ENCODE measurements at regions of chr1 and their contacts with region 1.

Region 1: GRCh38 chr1:41919764-41920397 is 1.2 kb upstream of the HIVEP3 start:
- DNase-seq: peak; percentile 55 to 85 (median 74)
- ATAC-seq: peak; percentile 83 to 86 (median 86)
- H3K4me3 ChIP-seq: peak overlapping the region; percentile 58 to 72
- H3K4me3 Mint-ChIP-seq: peak overlapping the region; percentile 88 to 91 (median 90)
- H3K27ac ChIP-seq: peak overlapping the region; percentile 79
- H3K27ac Mint-ChIP-seq: peak overlapping the region; percentile 97
- H3K4me1 ChIP-seq: peaks cover 43 to 47% of the 10 kb centered on the region in 2 experiments
- H3K4me1 Mint-ChIP-seq: peaks cover 58 to 68% (median 59%) of the 10 kb centered on the region in 3 donors
- H3K27me3 ChIP-seq: no peaks in the 10 kb centered on the region
- H3K27me3 Mint-ChIP-seq: peaks cover 0 to 3% of the 10 kb centered on the region in 2 donors

Region 2: GRCh38 chr1:41891199-41891896 is 28.5 kb before region 1 on chr1:
- CTCF ChIA-PET with region 1: interaction called in 1 of 2 experiments, 37 read pairs
- POLR2A ChIA-PET with region 1: interaction called in 1 of 2 experiments, 5 read pairs
- DNase-seq: peak; percentile 32 to 84 (median 55)
- ATAC-seq: peak; percentile 92 to 98 (median 96)
- H3K4me3 ChIP-seq: peak overlapping the region; percentile 52
- H3K4me3 Mint-ChIP-seq: peak overlapping the region; percentile 72 to 80 (median 77)
- H3K27ac ChIP-seq: peak overlapping the region; percentile 79
- H3K27ac Mint-ChIP-seq: peak overlapping the region; percentile 87 to 95
- H3K4me1 ChIP-seq: peaks cover 16 to 61% of the 10 kb centered on the region in 2 experiments
- H3K4me1 Mint-ChIP-seq: peaks cover 52 to 67% (median 62%) of the 10 kb centered on the region in 3 donors
- H3K27me3 ChIP-seq: no peaks in the 10 kb centered on the region
- H3K27me3 Mint-ChIP-seq: no peaks in the 10 kb centered on the region

Region 3: DNA sequence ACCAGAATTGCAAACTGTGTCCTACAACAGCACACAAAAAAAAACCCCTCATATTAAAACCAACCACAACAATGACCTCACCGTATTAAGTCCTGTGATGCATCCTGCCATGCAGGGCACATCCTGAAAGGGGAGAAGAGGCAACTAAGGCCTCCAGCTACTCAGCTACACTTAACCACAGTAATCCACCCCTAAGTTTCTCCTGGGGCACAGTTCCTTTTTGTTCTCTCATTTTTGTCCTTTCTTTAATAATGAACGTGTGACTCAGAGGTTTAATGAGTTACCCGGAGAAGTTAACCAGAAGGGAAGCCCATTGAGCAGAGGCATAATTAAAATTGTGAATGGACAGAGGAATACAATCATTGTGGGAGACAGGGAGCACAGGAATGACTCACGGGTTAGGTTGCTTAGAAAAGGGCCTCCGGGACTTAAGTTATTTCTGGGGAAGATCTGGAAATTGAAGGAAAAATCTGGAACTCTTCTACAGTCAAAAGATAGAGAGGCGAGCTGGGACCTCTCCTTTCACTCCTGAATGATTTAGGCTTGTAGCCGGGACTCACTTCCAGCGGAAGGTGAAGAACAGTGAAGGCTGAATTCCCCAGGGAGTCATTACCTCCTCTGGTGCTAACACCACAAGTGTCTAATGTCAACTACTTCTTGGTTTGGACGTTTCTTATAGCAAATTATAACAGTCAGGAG is 35.7 kb after region 1 on chr1:
- CTCF ChIA-PET with region 1: no interaction called
- POLR2A ChIA-PET with region 1: no interaction called
- DNase-seq: no peak
- ATAC-seq: peak in 1 of 4 experiments; percentile 46
- H3K4me3 ChIP-seq: no peak overlapping the region
- H3K4me3 Mint-ChIP-seq: no peak overlapping the region
- H3K27ac ChIP-seq: no peak overlapping the region
- H3K27ac Mint-ChIP-seq: no peak overlapping the region
- H3K4me1 ChIP-seq: no peaks in the 10 kb centered on the region
- H3K4me1 Mint-ChIP-seq: peaks cover 9 to 19% (median 10%) of the 10 kb centered on the region in 3 donors
- H3K27me3 ChIP-seq: no peaks in the 10 kb centered on the region
- H3K27me3 Mint-ChIP-seq: no peaks in the 10 kb centered on the region